ENCODE measurements at regions of chr4 and their contacts with region 1.

Region 1: GRCh38 chr4:82462415-82462831 is 32.0 kb downstream of the ENOPH1 start:
- DNase-seq: peak; percentile 86

Region 2: GRCh38 chr4:81884986-81885385 is 577.4 kb before region 1 on chr4:
- intact Hi-C with region 1: no loop called
- DNase-seq: no peak

Region 3: DNA sequence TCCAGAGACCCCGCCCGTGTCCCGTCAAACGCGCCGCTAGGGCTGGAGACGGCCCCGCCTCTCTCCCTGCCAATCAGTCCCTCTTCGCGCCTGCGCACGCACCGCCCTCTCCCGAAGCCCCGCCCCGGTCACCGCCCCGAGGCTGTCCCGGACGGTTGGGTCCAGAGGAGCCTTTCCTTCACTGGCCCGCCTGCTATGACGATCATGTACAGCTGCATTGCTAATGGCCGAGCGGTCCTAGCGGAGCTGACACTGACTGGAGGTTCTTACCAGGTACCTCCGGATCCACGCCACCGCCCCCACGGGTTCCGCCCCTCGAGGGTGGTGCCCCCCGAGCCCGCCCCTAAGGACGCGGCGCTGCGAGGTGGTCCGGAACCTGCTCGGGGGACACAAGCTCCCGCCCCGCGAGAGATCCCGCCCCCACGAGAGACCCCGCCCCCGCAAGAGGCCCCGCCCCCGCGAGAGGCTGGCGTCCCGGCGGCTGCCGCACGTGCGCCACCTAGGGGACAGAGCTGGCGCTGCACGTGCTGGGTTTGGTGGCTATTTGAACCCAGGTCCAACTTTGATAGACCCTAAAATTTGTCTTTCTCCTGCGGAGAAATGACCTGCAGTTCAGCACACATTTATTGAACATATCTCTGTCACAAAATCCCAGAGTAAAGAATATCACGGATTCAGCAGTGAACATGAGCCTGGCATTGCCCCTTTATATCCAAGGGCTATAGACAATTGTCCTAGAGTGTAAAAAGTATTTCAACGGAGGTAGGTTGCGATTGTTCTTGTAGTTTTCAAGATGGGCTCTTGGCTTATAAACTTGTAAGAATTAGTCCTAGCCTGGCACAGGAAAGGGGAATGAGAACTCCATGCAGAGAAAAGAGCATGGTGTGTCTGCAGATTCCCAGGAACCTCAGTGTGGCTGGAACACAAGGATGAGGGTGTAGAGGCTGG is 177.3 kb before region 1 on chr4:
- intact Hi-C with region 1: no loop called
- DNase-seq: peak; percentile 100

Region 4: GRCh38 chr4:82561745-82562515 is 99.5 kb after region 1 on chr4 and contains the start of gene TMEM150C:
- intact Hi-C with region 1: no loop called
- DNase-seq: no peak
- total RNA-seq, gene TMEM150C: 7.4 TPM

Region 5: DNA sequence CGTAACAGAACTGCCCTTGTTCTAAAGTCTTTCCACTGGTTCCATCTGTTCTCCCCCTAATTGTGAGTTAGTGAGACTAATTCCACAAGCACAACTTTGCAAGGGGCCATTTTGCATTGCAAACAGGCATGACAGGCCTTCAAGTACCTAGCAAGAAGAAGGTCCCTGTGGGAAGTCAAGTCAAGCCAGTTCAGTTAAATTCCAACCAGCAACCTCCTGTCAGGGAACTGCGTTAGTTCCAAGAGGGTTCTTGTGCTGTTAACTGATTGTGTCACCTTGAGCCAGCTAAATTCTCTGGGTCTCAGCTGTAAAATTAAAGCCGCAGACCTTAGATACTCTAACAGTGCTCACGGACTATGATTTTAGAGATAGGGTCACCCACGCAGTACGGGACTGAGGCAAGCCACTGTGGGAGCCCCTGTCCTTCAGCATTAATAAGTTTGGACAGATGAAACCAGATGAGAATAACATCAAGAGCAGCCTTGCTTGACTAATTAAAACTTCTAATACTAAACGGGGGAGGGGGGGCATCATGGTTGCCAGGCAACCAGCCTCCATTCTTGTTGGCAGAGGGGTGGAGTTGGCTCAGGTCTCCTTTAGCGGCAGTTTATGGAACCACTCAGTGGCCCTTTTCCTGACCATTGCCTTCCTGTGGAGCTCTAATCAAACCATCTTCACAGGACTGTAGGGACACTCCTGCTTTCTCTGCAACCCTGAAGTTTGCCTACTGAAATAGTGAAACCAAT is 123.4 kb after region 1 on chr4:
- intact Hi-C with region 1: no loop called
- DNase-seq: no peak

Region 6: DNA sequence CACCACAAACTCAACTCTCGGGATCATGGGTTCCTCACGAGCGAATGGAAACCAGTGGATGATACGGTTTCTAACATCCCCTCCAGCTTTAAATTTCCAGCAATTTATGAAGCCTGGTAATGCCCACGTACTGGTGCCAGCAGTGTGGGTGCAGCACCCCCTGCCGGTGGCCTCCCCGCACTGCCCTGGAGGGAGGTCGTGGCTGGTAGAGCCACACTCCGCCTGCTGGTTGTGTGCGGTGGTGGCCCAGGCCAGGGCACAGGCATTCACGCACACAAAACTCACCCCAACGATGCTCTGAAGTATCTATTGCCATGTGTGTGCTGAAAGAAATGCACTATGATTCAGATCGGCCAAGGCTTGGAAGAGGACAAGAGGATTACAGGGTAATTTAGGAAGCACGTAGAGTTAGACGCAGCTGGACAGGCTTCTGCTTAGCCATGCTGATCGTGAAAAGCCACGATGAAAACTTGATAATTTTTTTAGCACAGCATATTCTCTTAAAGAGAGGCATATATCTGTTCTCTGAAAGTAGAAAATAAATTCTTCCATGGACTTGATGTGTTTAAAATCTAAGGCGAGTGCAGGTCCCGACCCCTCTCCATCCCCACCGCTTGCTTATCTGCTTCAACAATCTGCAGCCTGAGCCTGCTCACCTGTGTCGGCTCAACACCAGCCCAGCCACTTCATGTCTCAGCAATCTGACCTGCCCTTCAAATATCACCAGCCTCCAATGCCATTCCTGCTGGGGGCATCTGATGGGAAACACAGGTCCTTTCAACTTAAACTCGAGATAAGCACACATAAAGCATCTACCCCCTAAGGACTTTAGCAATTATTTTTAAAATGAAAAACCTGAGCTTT is 277.1 kb after region 1 on chr4:
- intact Hi-C with region 1: loop called (anchors 2 kb)
- DNase-seq: no peak

Region 7: GRCh38 chr4:83261307-83261706 is 798.9 kb after region 1 on chr4:
- intact Hi-C with region 1: loop called (anchors 5 kb)
- DNase-seq: no peak